Posterior vena cava (tissue), 2 donors: ENCODE measurements at regions of chr10 and their contacts with region 1.

Region 1: DNA sequence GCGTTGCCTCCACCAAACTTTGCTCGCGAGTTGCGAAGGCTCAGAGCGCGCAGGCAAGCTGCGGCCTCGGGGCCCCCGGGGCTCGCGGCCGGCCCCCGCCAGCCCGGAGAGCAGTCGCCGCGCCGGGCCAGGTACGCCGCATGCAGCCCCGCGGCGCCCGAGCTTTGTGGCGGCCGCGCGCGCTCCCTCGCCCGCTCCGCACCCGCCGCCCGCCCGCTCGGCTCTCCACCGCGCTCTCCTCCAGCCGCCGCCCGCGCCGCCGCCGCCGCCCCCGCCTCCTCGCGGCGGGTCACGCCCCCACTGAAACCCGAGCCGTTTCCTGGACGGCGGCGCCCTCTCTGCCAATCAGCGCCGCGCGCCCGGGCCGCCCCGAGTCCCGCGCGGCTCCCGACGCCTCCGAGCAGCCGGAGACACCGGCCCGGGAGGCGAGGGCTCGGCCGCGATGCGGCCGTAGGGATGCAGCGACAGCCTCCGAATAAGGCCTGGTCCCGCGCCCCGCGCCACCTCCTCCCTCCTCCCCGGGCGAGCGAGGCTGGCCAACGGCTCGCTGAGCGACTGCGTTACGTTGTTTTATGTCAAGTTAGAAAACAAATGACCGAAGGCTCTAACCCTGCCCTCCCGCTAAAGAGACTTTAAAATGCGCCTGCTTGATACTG is at the start of gene FGFR2:
- DNase-seq: peak; percentile 88
- total RNA-seq, gene FGFR2: 16.4 to 17.7 TPM

Region 2: GRCh38 chr10:121324678-121325213 is 273.6 kb before region 1 on chr10:
- intact Hi-C with region 1: no loop called
- DNase-seq: no peak

Region 3: GRCh38 chr10:121459765-121460453 is 138.4 kb before region 1 on chr10:
- intact Hi-C with region 1: loop called in 1 of 2 experiments (anchors 10 kb)
- DNase-seq: no peak

Region 4: GRCh38 chr10:121497513-121498470 is 100.5 kb before region 1 on chr10:
- intact Hi-C with region 1: no loop called
- DNase-seq: no peak

Region 5: DNA sequence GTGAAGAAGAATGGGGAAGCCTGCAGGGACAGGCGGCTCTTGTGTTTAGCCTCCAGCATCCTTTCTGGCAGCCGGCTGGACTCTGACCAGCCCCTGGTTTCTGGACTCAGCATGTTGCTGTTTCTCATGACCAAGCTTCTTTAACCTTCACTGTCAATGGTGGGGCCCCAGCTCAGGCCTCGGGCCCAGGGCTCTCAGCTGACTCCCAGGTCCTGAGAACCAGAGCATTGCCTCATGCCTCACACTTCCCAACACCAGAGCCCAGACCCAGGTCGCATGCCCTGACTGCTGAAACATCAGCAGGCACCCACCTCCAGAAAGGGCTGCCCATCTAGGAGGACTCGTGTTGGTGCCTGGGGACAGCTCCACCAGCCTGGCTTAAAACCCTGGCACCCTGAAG is 34.7 kb after region 1 on chr10:
- intact Hi-C with region 1: loop called in 1 of 2 experiments (anchors 1 kb)
- DNase-seq: peak; percentile 68